ENCODE measurements at regions of chr18 and their contacts with region 1.

Region 1: GRCh38 chr18:44679056-44679905 is 1.4 kb upstream of the SETBP1 start:
- DNase-seq: peak; percentile 78
- H3K4me3 Mint-ChIP-seq: peak overlapping the region; percentile 71
- H3K27ac Mint-ChIP-seq: peak overlapping the region; percentile 31
- H3K4me1 Mint-ChIP-seq: no peaks in the 10 kb centered on the region
- H3K27me3 Mint-ChIP-seq: no peaks in the 10 kb centered on the region
- CTCF ChIP-seq: peak; percentile 39

Region 2: GRCh38 chr18:43620936-43621335 is 1058.3 kb before region 1 on chr18:
- CTCF ChIA-PET with region 1: no interaction called
- POLR2A ChIA-PET with region 1: no interaction called
- intact Hi-C with region 1: loop called (anchors 2 kb)
- DNase-seq: peak; percentile 54
- H3K4me3 Mint-ChIP-seq: no peak overlapping the region
- H3K27ac Mint-ChIP-seq: no peak overlapping the region
- H3K4me1 Mint-ChIP-seq: no peaks in the 10 kb centered on the region
- H3K27me3 Mint-ChIP-seq: peaks cover 34% of the 10 kb centered on the region
- CTCF ChIP-seq: peak; percentile 47

Region 3: GRCh38 chr18:44325903-44326635 is 353.2 kb before region 1 on chr18:
- CTCF ChIA-PET with region 1: interaction called, 3 read pairs
- POLR2A ChIA-PET with region 1: no interaction called
- intact Hi-C with region 1: loop called (anchors 10 kb)
- DNase-seq: peak; percentile 78
- H3K4me3 Mint-ChIP-seq: no peak overlapping the region
- H3K27ac Mint-ChIP-seq: no peak overlapping the region
- H3K4me1 Mint-ChIP-seq: no peaks in the 10 kb centered on the region
- H3K27me3 Mint-ChIP-seq: no peaks in the 10 kb centered on the region
- CTCF ChIP-seq: peak; percentile 54

Region 4: DNA sequence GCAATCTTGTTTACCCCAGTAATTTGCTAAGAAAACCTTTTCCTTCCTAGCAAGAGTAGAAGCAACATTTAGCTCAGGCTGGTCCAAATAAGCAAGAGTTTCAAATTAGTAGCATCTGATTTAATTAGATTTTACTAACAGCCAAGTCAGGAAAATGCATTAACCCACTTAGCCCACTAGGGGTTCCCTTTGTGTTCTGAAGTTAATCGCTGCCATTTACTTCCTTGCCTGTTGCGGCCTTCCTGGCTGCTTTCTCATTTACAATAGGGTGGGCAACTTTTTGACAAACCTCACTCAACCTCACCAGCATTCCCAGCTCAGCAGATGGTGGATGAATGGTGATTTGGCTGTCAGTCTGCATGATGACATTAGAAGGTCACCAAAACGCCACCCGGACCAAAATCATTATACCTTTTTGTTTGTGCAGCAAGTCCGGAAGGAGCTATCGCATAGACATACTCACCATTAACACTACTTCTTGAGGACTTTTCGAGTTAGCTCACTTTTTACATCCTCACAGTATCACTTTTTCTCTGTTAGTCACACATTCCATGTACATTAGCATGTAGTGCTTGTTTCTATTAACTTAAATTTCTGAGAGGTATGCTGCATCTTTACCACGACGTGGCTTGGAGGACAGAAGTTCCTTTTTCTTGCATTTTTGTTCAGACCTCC is 100.1 kb before region 1 on chr18:
- CTCF ChIA-PET with region 1: interaction called, 8 read pairs
- POLR2A ChIA-PET with region 1: no interaction called
- intact Hi-C with region 1: loop called (anchors 2 kb)
- DNase-seq: peak; percentile 53
- H3K4me3 Mint-ChIP-seq: no peak overlapping the region
- H3K27ac Mint-ChIP-seq: no peak overlapping the region
- H3K4me1 Mint-ChIP-seq: peaks cover 13% of the 10 kb centered on the region
- H3K27me3 Mint-ChIP-seq: no peaks in the 10 kb centered on the region
- CTCF ChIP-seq: peak; percentile 59

Region 5: GRCh38 chr18:44601447-44601846 is 77.8 kb before region 1 on chr18:
- CTCF ChIA-PET with region 1: no interaction called
- POLR2A ChIA-PET with region 1: no interaction called
- intact Hi-C with region 1: no loop called
- DNase-seq: peak; percentile 77
- H3K4me3 Mint-ChIP-seq: no peak overlapping the region
- H3K27ac Mint-ChIP-seq: peak overlapping the region; percentile 80
- H3K4me1 Mint-ChIP-seq: peaks cover 46% of the 10 kb centered on the region
- H3K27me3 Mint-ChIP-seq: no peaks in the 10 kb centered on the region
- CTCF ChIP-seq: no peak

Region 6: GRCh38 chr18:44887227-44887631 is 207.9 kb after region 1 on chr18:
- CTCF ChIA-PET with region 1: interaction called, 3 read pairs
- POLR2A ChIA-PET with region 1: no interaction called
- intact Hi-C with region 1: loop called (anchors 2 kb)
- DNase-seq: peak; percentile 73
- H3K4me3 Mint-ChIP-seq: no peak overlapping the region
- H3K27ac Mint-ChIP-seq: peak overlapping the region; percentile 80
- H3K4me1 Mint-ChIP-seq: peaks cover 11% of the 10 kb centered on the region
- H3K27me3 Mint-ChIP-seq: no peaks in the 10 kb centered on the region
- CTCF ChIP-seq: no peak

Region 7: GRCh38 chr18:45384137-45384961 is 705.1 kb after region 1 on chr18:
- CTCF ChIA-PET with region 1: interaction called, 4 read pairs
- POLR2A ChIA-PET with region 1: no interaction called
- intact Hi-C with region 1: loop called (anchors 5 kb)
- DNase-seq: peak; percentile 72
- H3K4me3 Mint-ChIP-seq: no peak overlapping the region
- H3K27ac Mint-ChIP-seq: no peak overlapping the region
- H3K4me1 Mint-ChIP-seq: peaks cover 6% of the 10 kb centered on the region
- H3K27me3 Mint-ChIP-seq: no peaks in the 10 kb centered on the region
- CTCF ChIP-seq: peak; percentile 69

Measured in MCF 10A (cell line).